Body of pancreas (tissue), 4 donors: ENCODE measurements at regions of chr6 and their contacts with region 1.

Region 1: GRCh38 chr6:154509421-154510142 is 903 bp downstream of the CNKSR3 start:
- DNase-seq: peak; percentile 27 to 55 (median 45)
- ATAC-seq: peak; percentile 0
- H3K4me3 ChIP-seq: peak overlapping the region; percentile 69 to 88
- H3K27ac ChIP-seq: peak overlapping the region; percentile 96 to 99 (median 98)
- H3K4me1 ChIP-seq: peaks cover 57% of the 10 kb centered on the region
- H3K27me3 ChIP-seq: no peaks in the 10 kb centered on the region
- CTCF ChIP-seq: no peak
- POLR2A ChIP-seq: no peak

Region 2: DNA sequence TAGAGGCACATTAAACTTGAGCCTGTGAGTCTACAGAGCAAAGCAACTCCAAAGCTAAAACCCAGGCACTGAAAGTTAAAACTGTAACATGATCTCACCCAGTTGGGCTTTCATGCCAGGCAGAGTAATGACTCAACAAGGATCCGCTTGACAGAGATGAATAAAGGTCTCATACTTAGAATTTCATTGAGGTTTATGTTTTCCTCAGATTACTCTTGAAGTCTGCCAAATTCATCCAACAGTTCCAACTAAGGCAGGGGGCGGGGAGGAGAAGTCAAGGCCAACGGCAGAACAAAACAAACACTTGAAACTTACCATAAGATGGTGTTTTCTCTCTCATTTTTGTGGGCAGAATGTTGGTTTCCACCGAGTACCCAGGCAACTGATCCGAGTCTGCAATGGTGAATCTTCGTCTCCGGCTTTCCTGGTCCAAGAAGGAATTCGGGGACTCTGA is 98.9 kb before region 1 on chr6:
- intact Hi-C with region 1: loop called (anchors 10 kb)
- DNase-seq: peak; percentile 23 to 58 (median 43)
- ATAC-seq: peak; percentile 87
- H3K4me3 ChIP-seq: no peak overlapping the region
- H3K27ac ChIP-seq: peak overlapping the region; percentile 52 to 74 (median 69)
- H3K4me1 ChIP-seq: peaks cover 33% of the 10 kb centered on the region
- H3K27me3 ChIP-seq: no peaks in the 10 kb centered on the region
- CTCF ChIP-seq: no peak
- POLR2A ChIP-seq: no peak

Region 3: GRCh38 chr6:154448448-154449096 is 61.0 kb before region 1 on chr6:
- intact Hi-C with region 1: no loop called
- DNase-seq: peak in 3 of 4 donors; percentile 38 to 48 (median 46)
- ATAC-seq: peak; percentile 71
- H3K4me3 ChIP-seq: no peak overlapping the region
- H3K27ac ChIP-seq: peak overlapping the region; percentile 27 to 69 (median 56)
- H3K4me1 ChIP-seq: peaks cover 58% of the 10 kb centered on the region
- H3K27me3 ChIP-seq: no peaks in the 10 kb centered on the region
- CTCF ChIP-seq: peak in 5 of 7 experiments; percentile 7 to 44 (median 28)
- POLR2A ChIP-seq: no peak